Endothelial cell of umbilical vein (primary cell): ENCODE measurements at regions of chr3 and their contacts with region 1.

Region 1: DNA sequence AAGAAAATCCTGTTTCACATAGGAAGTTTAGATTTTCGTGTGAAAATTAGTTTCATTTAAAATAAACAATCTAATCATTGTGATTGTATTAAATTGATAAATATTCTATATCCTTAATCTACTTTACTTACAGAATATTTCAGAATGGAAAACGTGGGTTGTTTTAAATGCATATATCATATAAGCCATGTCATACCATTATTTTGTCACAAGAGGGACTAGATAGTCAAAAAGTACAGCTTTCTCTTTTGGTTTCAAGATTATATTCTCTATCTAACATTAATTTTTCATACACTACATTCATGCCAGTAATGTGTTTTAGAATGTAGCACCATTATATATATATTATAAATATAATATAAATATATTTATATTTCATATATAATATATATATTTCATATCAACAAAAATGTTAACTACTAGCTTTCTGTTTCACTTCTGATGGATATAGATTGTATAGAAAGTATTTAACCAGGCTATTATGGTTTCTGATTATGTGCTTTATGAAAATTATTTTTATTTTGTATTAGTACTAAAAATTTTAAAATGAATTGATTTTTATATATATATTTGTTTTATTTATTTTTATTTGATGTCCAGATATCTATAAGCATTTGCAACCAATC is 45.3 kb downstream of the OSTN start:
- DNase-seq: peak; percentile 39
- H3K4me3 ChIP-seq: no peak overlapping the region
- H3K27ac ChIP-seq: no peak overlapping the region
- H3K4me1 ChIP-seq: peaks cover 18% of the 10 kb centered on the region
- H3K27me3 ChIP-seq: no peaks in the 10 kb centered on the region
- CTCF ChIP-seq: peak; percentile 15 to 19
- POLR2A ChIP-seq: no peak

Region 2: DNA sequence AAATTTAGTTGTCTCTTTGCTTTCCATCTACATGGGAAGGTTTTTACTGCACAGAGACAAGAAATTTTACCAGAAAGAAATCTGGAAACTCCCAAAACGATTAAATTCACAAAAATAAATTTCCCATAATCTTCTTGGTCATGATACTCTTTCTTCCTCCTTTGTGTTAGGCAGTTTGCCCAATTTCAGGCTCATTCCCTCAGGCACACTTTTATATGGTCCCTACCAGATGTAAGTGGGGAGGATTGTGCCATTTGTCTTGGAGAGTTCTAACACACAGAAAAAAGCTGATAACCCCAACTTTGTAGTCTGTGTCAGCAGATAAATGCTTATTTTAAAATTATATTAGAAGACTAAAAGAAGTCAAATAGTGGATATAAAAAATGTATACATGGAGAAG is 35.8 kb after region 1 on chr3:
- CTCF ChIA-PET with region 1: no interaction called
- POLR2A ChIA-PET with region 1: no interaction called
- dilution Hi-C with region 1: no loop called
- intact Hi-C with region 1: no loop called
- DNase-seq: no peak
- H3K4me3 ChIP-seq: no peak overlapping the region
- H3K27ac ChIP-seq: no peak overlapping the region
- H3K4me1 ChIP-seq: no peaks in the 10 kb centered on the region
- H3K27me3 ChIP-seq: no peaks in the 10 kb centered on the region
- CTCF ChIP-seq: no peak
- POLR2A ChIP-seq: no peak

Region 3: DNA sequence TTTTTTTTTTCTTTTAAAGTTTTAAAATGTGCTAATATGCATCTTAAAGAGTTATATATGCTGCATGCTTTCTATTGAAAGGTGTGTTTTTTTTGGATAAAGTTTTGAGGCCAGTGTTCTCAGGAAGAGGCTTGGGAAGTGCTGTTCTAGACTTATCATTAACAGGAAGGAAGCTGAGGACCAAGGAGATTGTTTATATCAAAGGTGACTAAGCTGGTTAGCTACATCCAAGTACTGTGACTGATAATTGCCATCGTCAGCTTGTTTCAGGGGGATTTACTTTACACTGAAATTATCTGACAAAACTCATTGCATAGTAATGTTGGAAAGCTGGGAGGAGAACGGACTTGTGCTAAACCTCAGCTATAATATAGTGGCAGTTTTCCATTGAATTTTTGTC is 122.3 kb after region 1 on chr3:
- CTCF ChIA-PET with region 1: interaction called, 16 read pairs
- POLR2A ChIA-PET with region 1: no interaction called
- dilution Hi-C with region 1: no loop called
- intact Hi-C with region 1: no loop called
- DNase-seq: peak; percentile 78
- H3K4me3 ChIP-seq: peak overlapping the region in 1 of 3 experiments; percentile 50
- H3K27ac ChIP-seq: peak overlapping the region; percentile 61
- H3K4me1 ChIP-seq: peaks cover 38% of the 10 kb centered on the region
- H3K27me3 ChIP-seq: no peaks in the 10 kb centered on the region
- CTCF ChIP-seq: no peak
- POLR2A ChIP-seq: peak; percentile 61

Region 4: DNA sequence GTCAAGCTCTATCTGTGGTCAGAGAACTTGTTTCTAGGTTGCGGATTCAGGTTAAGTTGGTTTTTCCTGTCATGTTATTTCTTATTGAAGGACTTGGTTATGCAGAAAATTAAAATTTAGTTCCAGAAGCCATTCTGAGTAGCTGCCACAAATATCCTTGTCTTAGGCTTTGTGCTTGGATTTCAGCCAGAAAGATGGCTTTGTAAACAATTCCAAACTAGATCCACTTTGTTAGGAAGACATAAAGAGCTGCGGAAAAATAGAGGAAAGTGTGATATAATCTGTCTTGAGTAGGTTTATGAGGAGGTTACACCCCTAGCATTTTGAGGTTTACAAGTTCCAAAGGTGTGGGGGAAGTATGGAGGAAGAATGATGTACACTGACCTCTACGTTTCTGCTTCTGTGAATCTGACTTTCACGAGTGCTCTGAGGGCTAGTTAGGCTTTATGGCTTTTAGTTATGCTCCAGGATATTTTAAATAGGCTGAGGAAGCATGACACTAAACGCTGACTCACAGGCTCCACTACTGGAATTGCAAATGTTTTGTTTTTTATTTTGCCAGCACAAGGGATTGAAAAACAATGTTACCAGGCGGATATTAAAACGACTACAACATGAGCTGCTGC is 132.3 kb after region 1 on chr3:
- CTCF ChIA-PET with region 1: interaction called, 11 read pairs
- POLR2A ChIA-PET with region 1: no interaction called
- dilution Hi-C with region 1: no loop called
- intact Hi-C with region 1: no loop called
- DNase-seq: peak; percentile 92
- H3K4me3 ChIP-seq: no peak overlapping the region
- H3K27ac ChIP-seq: peak overlapping the region; percentile 73
- H3K4me1 ChIP-seq: peaks cover 39% of the 10 kb centered on the region
- H3K27me3 ChIP-seq: no peaks in the 10 kb centered on the region
- CTCF ChIP-seq: no peak
- POLR2A ChIP-seq: no peak

Region 5: DNA sequence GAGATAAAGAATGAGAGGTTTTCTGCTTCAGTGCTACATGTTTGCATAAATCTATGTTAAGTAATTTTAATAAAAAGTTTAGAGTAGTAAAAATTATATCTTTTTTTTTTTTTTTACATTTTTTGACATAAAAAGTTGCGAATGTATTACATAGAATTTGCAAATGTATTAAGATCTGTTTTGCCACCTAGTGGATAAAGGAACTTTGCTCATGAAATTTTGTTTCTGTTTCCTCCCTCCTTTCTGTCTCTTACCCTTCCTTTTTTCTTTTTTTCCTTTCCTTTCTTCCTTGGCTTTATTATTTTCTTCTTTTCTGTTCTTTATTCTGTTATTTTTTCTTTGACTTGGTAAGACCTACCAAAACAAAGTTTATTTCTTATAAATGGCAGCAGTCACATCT is 144.5 kb after region 1 on chr3:
- CTCF ChIA-PET with region 1: interaction called, 7 read pairs
- POLR2A ChIA-PET with region 1: no interaction called
- dilution Hi-C with region 1: no loop called
- intact Hi-C with region 1: loop called (anchors 2 kb)
- DNase-seq: no peak
- H3K4me3 ChIP-seq: no peak overlapping the region
- H3K27ac ChIP-seq: no peak overlapping the region
- H3K4me1 ChIP-seq: no peaks in the 10 kb centered on the region
- H3K27me3 ChIP-seq: no peaks in the 10 kb centered on the region
- CTCF ChIP-seq: peak in 1 of 2 donors; percentile 8
- POLR2A ChIP-seq: no peak

Region 6: GRCh38 chr3:191641789-191642188 is 397.4 kb after region 1 on chr3:
- CTCF ChIA-PET with region 1: no interaction called
- POLR2A ChIA-PET with region 1: no interaction called
- dilution Hi-C with region 1: no loop called
- intact Hi-C with region 1: no loop called
- DNase-seq: no peak
- H3K4me3 ChIP-seq: no peak overlapping the region
- H3K27ac ChIP-seq: no peak overlapping the region
- H3K4me1 ChIP-seq: no peaks in the 10 kb centered on the region
- H3K27me3 ChIP-seq: no peaks in the 10 kb centered on the region
- CTCF ChIP-seq: no peak
- POLR2A ChIP-seq: no peak